ENCODE measurements at regions of chr22 and their contacts with region 1.

Region 1: DNA sequence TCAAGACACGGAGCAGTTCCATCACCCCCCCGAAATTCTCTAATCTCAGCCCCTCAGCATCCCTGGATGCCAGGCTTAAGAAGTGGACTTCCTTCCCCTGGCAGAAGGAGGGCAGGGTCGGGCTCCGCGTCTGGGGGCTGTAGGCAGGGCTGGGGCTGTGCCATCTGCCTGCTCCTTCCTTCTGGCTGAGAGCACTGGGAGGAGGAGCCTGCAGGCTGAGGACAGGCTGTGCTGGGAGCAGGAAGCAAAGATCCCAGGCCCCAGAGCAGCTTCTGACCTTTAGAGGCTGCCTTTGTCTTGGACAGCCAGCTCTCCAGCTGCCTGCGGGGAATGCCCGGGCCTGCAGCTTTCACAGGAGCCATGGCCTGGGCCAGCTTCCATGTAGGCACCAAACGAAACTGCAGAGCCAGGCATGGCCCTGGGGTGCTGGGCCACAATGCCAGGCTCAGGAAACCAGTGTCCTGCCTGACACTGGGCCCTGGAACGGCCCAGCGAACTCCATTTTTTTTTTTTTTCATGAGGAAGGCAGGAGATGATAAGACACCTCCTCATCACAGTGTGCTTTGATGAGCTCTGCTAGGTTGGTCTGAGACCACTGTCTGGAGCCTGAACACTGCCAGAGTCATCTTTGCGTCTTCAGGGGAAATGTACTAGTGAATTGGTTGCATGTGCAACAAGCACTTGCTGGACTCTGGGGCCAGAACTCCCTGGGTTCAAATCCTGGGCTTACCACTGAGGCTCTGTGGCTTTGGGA is 67.9 kb downstream of the MCM5 start:
- DNase-seq: peak; percentile 75 to 82
- ATAC-seq: peak; percentile 89 to 98 (median 96)
- H3K4me3 ChIP-seq: no peak overlapping the region
- H3K27ac ChIP-seq: peak overlapping the region; percentile 58 to 86 (median 75)
- H3K4me1 ChIP-seq: peaks cover 6 to 22% (median 17%) of the 10 kb centered on the region in 9 donors
- H3K27me3 ChIP-seq: no peaks in the 10 kb centered on the region
- CTCF ChIP-seq: no peak

Region 2: DNA sequence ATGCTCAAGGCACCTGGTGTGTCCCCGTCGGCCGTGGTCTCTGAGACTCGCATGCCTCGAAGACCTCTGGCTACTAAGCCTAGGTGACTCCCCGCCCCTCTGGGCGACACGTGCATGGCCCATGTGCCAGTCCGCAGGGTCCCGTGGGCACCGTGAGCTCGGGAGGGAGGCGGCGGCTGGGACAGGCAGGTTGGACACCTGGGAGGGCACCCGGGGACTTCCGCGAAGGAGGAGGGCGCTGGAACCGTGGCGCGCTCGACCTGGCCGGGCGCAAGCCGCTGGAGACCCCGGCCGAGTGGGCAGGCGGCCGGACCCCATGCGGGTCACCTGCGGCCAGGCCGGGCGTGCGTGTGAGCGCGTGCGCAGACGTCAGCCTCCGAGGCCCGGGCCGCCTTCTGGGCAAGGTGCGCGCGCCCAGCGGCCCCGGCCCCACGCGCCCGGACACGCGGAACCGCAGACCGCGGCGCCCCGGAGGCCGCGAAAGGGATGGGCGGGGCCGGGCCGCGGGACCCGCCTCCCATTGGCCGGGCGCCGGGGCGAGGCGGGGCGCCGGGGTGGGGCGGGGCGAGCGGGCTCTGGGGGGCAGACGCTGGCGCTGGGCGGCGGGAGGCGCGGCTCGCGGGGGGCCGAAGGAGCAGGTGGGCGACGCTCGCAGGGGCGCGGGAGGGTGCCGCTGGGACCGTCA is 72.2 kb after region 1 on chr22:
- intact Hi-C with region 1: loop called in 2 of 10 experiments (anchors 5 to 10 kb)
- DNase-seq: peak; percentile 55 to 77
- ATAC-seq: peak; percentile 36 to 91 (median 73)
- H3K4me3 ChIP-seq: peak overlapping the region; percentile 46 to 66 (median 59)
- H3K27ac ChIP-seq: peak overlapping the region; percentile 29 to 85 (median 68)
- H3K4me1 ChIP-seq: peaks cover 5 to 39% (median 23%) of the 10 kb centered on the region in 9 donors
- H3K27me3 ChIP-seq: peaks cover 0 to 57% (median 23%) of the 10 kb centered on the region in 7 donors
- CTCF ChIP-seq: no peak

Region 3: GRCh38 chr22:35561796-35562526 is 94.1 kb after region 1 on chr22:
- intact Hi-C with region 1: no loop called
- DNase-seq: no peak
- ATAC-seq: peak in 1 of 8 donors; percentile 37
- H3K4me3 ChIP-seq: no peak overlapping the region
- H3K27ac ChIP-seq: no peak overlapping the region
- H3K4me1 ChIP-seq: peaks cover 0 to 35% (median 13%) of the 10 kb centered on the region in 9 donors
- H3K27me3 ChIP-seq: peaks cover 0 to 7% (median 0%) of the 10 kb centered on the region in 7 donors
- CTCF ChIP-seq: no peak